A673 (cell line): ENCODE measurements at regions of chr17 and their contacts with region 1.

Region 1: GRCh38 chr17:59155439-59156182 is at the start of gene PRR11:
- DNase-seq: peak; percentile 100
- H3K4me3 ChIP-seq: peak within 1 kb of the TSS; percentile 62
- H3K27ac ChIP-seq: peak within 1 kb of the TSS; percentile 97
- H3K4me1 ChIP-seq: peaks cover 41% of the 10 kb centered on the region
- H3K27me3 ChIP-seq: no peaks in the 10 kb centered on the region
- CTCF ChIP-seq: no peak
- total RNA-seq, gene PRR11: 123 and 130 TPM in 2 replicates

Region 2: DNA sequence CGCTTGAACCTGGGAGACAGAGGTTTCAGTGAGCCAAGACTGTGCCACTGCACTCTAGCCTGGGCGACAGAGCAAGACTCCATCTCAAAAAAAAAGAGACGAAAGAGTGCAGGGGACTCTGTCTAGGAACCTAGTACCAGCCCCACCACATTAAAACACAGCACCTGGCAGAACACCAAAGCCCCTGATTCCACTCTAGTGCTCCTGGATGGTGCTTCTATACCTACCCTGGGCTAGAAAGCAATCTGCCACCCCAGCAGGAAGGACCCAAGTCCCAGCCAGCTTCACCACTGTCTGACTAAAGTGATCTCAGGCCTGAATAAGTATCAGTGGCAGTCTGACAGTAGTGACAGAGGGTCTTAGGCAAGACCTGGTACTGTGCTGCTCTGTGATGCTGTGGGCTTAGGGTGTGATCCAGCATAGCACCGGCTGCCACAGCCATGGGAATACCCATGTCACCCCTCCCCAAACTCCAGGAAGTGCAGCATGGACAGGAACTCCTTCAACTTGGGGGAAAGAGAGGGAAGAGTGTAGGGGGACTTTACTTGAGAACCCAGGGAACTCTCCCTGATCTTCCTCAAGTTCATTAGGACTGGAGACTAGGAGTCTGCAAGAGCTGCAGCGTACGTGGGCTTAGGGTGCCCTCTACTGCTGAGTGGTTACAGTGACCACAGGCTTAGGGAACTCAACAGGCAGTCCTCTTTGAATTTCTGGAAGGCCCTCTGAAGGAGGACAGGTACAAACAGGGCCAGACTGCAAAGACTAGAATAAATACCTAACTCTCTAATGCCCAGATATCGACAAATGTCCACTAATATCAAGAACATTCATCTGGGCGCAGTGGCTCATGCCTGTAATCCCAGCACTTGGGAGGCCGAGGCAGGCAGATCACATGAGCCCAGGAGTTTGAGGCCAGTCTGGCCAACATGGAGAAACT is 708.3 kb before region 1 on chr17:
- CTCF ChIA-PET with region 1: no interaction called
- POLR2A ChIA-PET with region 1: no interaction called
- intact Hi-C with region 1: no loop called
- DNase-seq: peak; percentile 82
- H3K4me3 ChIP-seq: no peak overlapping the region
- H3K27ac ChIP-seq: no peak overlapping the region
- H3K4me1 ChIP-seq: no peaks in the 10 kb centered on the region
- H3K27me3 ChIP-seq: peaks cover 13% of the 10 kb centered on the region
- CTCF ChIP-seq: peak; percentile 76

Region 3: DNA sequence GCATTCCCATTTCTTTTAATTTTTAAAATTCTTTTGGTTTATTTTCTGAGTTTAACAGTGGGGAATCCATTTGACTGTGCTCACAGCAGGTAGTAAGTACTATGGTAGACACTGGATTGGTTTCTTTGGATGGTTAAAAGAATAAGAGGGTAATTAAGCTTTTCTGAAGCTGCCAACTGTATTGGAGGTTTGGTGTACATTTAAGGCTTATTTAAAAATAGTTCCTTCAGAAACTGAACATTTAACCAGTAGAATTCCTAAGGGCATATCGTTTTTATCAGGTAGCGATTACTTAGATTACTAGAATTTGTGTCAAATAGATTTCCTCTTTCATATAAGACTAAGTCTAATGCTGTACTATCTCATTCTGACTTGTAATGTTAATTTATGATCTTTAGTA is 237.5 kb before region 1 on chr17:
- CTCF ChIA-PET with region 1: no interaction called
- POLR2A ChIA-PET with region 1: no interaction called
- intact Hi-C with region 1: no loop called
- DNase-seq: peak; percentile 81
- H3K4me3 ChIP-seq: no peak overlapping the region
- H3K27ac ChIP-seq: no peak overlapping the region
- H3K4me1 ChIP-seq: peaks cover 13% of the 10 kb centered on the region
- H3K27me3 ChIP-seq: no peaks in the 10 kb centered on the region
- CTCF ChIP-seq: no peak

Region 4: GRCh38 chr17:59004338-59005111 is 151.1 kb before region 1 on chr17:
- CTCF ChIA-PET with region 1: no interaction called
- POLR2A ChIA-PET with region 1: no interaction called
- intact Hi-C with region 1: no loop called
- DNase-seq: peak; percentile 75
- H3K4me3 ChIP-seq: no peak overlapping the region
- H3K27ac ChIP-seq: peak overlapping the region; percentile 25
- H3K4me1 ChIP-seq: peaks cover 25% of the 10 kb centered on the region
- H3K27me3 ChIP-seq: no peaks in the 10 kb centered on the region
- CTCF ChIP-seq: peak; percentile 94

Region 5: GRCh38 chr17:59106463-59107305 is 48.9 kb before region 1 on chr17 and contains the start of gene TRIM37:
- CTCF ChIA-PET with region 1: no interaction called
- POLR2A ChIA-PET with region 1: no interaction called
- intact Hi-C with region 1: loop called (anchors 5 kb)
- DNase-seq: peak; percentile 99
- H3K4me3 ChIP-seq: peak within 1 kb of the TSS; percentile 97
- H3K27ac ChIP-seq: peak within 1 kb of the TSS; percentile 89
- H3K4me1 ChIP-seq: no peaks in the 10 kb centered on the region
- H3K27me3 ChIP-seq: no peaks in the 10 kb centered on the region
- CTCF ChIP-seq: 0 out of 2 replicates have a peak, but pooled peaks have one; percentile 14
- total RNA-seq, gene TRIM37: 39.4 and 40.0 TPM in 2 replicates